Activated CD8-positive, alpha-beta T cell treated with anti-CD3 and anti-CD28 coated beads for 36 hours (primary cell): ENCODE measurements at regions of chr15 and their contacts with region 1.

Region 1: GRCh38 chr15:70535071-70535954 is 228.0 kb downstream of the UACA start:
- DNase-seq: peak; percentile 80
- ATAC-seq: peak; percentile 77
- H3K4me3 Mint-ChIP-seq: peak overlapping the region; percentile 81
- H3K27ac Mint-ChIP-seq: peak overlapping the region; percentile 89
- H3K4me1 Mint-ChIP-seq: peaks cover 48% of the 10 kb centered on the region
- H3K27me3 Mint-ChIP-seq: no peaks in the 10 kb centered on the region
- CTCF ChIP-seq: no peak

Region 2: DNA sequence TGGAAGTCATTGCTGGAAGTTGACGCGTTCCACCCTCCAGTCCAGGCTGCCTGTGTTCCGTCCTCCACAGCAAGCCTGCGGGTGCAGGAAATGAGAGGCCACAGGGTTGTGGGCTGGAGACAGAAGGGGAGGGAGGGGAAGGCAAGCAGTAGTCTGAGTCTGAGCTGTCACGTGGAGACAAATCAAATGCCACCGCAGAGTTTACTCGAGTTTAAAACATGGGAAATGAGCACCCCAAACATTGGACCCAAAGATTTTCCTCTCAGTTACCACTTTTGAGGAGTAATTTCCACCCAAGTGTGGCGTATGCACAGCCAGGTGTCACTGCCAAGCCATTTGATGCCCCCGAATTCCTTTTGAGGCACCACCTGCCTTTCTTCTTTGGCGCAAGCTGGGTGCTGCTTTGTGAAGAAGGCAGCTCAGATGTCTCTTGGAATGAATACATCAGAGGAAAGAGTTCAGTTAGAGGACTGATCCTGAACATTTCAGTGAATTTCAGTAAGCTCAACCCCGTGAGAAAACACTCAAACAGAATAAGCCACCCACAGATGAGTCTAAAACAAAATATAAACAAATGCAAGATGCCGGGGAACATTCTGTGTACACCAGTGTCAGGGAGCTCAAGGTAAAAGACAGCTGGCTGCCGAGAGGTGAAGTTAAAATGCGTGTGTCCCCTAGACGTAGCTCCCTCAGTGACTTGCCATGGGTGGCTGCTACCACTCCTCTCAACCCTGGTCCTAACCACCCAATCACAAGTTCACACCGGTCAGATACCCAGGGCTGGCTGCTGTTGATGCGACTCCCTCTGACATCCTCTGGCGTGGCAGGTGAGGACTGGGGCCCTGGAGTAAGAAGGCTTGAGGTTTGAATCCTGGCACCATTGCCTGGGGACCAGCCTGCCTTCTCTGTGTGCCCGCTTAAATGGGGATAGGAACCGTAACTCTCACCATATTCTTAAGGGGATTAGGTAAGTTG is 24.2 kb after region 1 on chr15:
- CTCF ChIA-PET with region 1: interaction called, 5 read pairs
- POLR2A ChIA-PET with region 1: interaction called, 12 read pairs
- intact Hi-C with region 1: no loop called
- DNase-seq: peak; percentile 82
- ATAC-seq: peak; percentile 82
- H3K4me3 Mint-ChIP-seq: no peak overlapping the region
- H3K27ac Mint-ChIP-seq: no peak overlapping the region
- H3K4me1 Mint-ChIP-seq: peaks cover 9% of the 10 kb centered on the region
- H3K27me3 Mint-ChIP-seq: no peaks in the 10 kb centered on the region
- CTCF ChIP-seq: no peak

Region 3: GRCh38 chr15:70584838-70585706 is 49.8 kb after region 1 on chr15:
- CTCF ChIA-PET with region 1: interaction called, 15 read pairs
- POLR2A ChIA-PET with region 1: interaction called, 4 read pairs
- intact Hi-C with region 1: no loop called
- DNase-seq: peak; percentile 56
- ATAC-seq: peak; percentile 70
- H3K4me3 Mint-ChIP-seq: peak overlapping the region; percentile 22
- H3K27ac Mint-ChIP-seq: no peak overlapping the region
- H3K4me1 Mint-ChIP-seq: peaks cover 15% of the 10 kb centered on the region
- H3K27me3 Mint-ChIP-seq: peaks cover 25% of the 10 kb centered on the region
- CTCF ChIP-seq: peak; percentile 70

Region 4: GRCh38 chr15:70605606-70606410 is 70.5 kb after region 1 on chr15:
- CTCF ChIA-PET with region 1: no interaction called
- POLR2A ChIA-PET with region 1: no interaction called
- intact Hi-C with region 1: no loop called
- DNase-seq: no peak
- ATAC-seq: no peak
- H3K4me3 Mint-ChIP-seq: no peak overlapping the region
- H3K27ac Mint-ChIP-seq: no peak overlapping the region
- H3K4me1 Mint-ChIP-seq: no peaks in the 10 kb centered on the region
- H3K27me3 Mint-ChIP-seq: no peaks in the 10 kb centered on the region
- CTCF ChIP-seq: no peak